ENCODE measurements at regions of chr7 and their contacts with region 1.

Region 1: GRCh38 chr7:80722616-80723141 is 84.2 kb downstream of the CD36 start:
- DNase-seq: peak in 1 of 2 donors; percentile 89
- H3K4me3 ChIP-seq: no peak overlapping the region
- H3K27ac ChIP-seq: peak overlapping the region; percentile 10 to 19
- H3K4me1 ChIP-seq: peaks cover 0 to 11% of the 10 kb centered on the region in 2 donors
- H3K27me3 ChIP-seq: no peaks in the 10 kb centered on the region
- CTCF ChIP-seq: no peak

Region 2: GRCh38 chr7:80781561-80781979 is 58.9 kb after region 1 on chr7:
- intact Hi-C with region 1: loop called (anchors 5 kb)
- DNase-seq: no peak
- H3K4me3 ChIP-seq: no peak overlapping the region
- H3K27ac ChIP-seq: peak overlapping the region in 1 of 2 donors; percentile 27
- H3K4me1 ChIP-seq: peaks cover 5 to 10% of the 10 kb centered on the region in 2 donors
- H3K27me3 ChIP-seq: no peaks in the 10 kb centered on the region
- CTCF ChIP-seq: no peak

Region 3: DNA sequence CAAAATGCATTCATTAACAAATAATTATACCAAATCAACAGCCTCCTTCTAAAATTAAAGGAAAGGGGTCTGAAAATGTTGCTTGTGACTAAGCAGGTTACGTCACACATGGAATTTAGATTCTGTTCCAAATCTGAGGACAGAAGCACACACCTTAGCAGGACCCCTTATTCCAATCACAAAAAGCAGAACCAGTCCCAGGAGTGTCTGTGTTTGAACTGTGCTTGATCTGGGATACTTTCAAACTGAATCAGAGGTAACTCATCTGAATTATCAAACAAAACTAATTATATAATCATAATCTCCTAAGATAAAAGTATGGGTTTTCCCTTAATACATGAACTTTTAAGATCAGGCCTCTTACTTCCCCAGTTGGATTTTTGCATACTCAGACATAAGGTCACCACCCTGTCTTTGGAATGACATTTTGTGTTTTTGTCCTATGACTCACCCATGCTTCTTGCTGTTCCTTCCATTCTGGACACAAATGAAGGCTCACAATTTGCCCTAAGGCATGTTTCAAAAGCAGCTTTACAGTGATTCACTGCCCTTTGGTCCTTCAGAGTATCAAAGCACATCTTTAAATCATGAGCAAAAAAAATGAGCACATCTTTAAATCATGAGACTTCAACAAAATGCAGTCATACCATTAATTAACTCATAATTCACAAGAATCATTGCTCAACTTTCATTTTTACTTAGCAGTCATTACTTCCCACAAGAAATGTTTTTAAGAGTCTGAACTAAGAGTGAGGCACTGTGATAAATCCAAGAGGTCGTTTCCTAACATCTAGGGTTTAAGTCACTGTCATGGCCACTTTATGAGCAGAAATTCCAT is 160.7 kb after region 1 on chr7:
- intact Hi-C with region 1: loop called (anchors 5 kb)
- DNase-seq: no peak
- H3K4me3 ChIP-seq: no peak overlapping the region
- H3K27ac ChIP-seq: peak overlapping the region; percentile 68 to 70
- H3K4me1 ChIP-seq: peaks cover 3 to 12% of the 10 kb centered on the region in 2 donors
- H3K27me3 ChIP-seq: no peaks in the 10 kb centered on the region
- CTCF ChIP-seq: no peak

Region 4: DNA sequence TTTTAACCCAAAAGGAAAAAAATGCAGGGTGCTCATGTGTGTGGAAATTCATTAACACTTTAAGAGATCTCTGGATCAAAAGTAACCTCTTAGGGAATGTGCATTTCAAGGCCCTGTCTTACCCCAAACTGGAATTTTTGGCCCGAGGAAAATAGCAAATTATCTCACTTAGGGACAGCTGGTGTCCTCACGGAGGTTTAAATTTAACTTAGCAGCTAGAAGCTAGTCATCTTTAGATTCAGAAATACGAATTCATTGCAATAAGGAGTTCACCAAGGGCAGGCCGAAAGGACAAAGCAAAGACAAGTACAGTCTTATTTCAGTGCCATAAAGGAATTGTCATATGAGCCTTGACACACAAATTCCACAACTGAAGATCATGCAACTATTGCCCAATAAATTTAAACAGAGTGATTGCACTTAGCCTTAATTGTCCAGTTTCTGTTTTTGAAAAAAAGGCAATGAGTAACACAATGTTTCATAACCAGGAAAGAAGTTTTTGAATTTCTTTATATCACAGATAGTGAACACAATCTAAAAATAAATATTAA is 218.6 kb after region 1 on chr7:
- intact Hi-C with region 1: loop called (anchors 5 kb)
- DNase-seq: no peak
- H3K4me3 ChIP-seq: no peak overlapping the region
- H3K27ac ChIP-seq: peak overlapping the region in 1 of 2 donors; percentile 23
- H3K4me1 ChIP-seq: peaks cover 0 to 3% of the 10 kb centered on the region in 2 donors
- H3K27me3 ChIP-seq: no peaks in the 10 kb centered on the region
- CTCF ChIP-seq: no peak